IMR-90 (cell line): ENCODE measurements at regions of chr10 and their contacts with region 1.

Region 1: GRCh38 chr10:125928928-125929585 is 32.7 kb downstream of the FANK1 start:
- DNase-seq: no peak
- ATAC-seq: no peak
- H3K4me3 ChIP-seq: no peak overlapping the region
- H3K27ac ChIP-seq: no peak overlapping the region
- H3K4me1 ChIP-seq: no peaks in the 10 kb centered on the region
- H3K27me3 ChIP-seq: no peaks in the 10 kb centered on the region; the same call in 1 of the 2 replicates
- CTCF ChIP-seq: no peak
- POLR2A ChIP-seq: no peak
- RAD21 ChIP-seq: no peak

Region 2: GRCh38 chr10:125742465-125742864 is 186.6 kb before region 1 on chr10:
- CTCF ChIA-PET with region 1: no interaction called
- POLR2A ChIA-PET with region 1: no interaction called
- dilution Hi-C with region 1: no loop called
- in situ Hi-C with region 1: no loop called
- intact Hi-C with region 1: no loop called
- DNase-seq: no peak
- ATAC-seq: peak; percentile 29; the same call in 1 of the 2 replicates
- H3K4me3 ChIP-seq: no peak overlapping the region
- H3K27ac ChIP-seq: no peak overlapping the region
- H3K4me1 ChIP-seq: no peaks in the 10 kb centered on the region
- H3K27me3 ChIP-seq: no peaks in the 10 kb centered on the region
- CTCF ChIP-seq: 0 out of 2 replicates have a peak, but pooled peaks have one; percentile 8
- POLR2A ChIP-seq: no peak
- RAD21 ChIP-seq: no peak

Region 3: DNA sequence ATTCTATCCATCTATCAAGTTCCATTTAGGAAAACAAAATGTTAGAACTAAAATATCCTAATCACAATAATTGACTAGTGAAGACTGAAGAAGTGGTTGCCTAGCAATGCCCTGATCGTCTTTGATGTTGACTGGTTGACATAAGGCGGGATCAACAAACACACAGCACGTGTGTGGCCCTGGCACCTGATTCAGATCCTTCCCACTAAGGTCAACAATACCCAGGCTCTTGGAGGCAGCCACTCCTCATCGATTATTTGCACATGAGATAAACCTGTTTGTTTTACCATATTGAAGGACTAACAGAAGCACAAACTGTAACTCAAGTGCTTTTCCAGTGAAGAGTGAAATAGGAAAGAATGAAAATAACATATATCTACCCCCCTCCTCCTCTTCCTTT is 17.1 kb before region 1 on chr10:
- CTCF ChIA-PET with region 1: no interaction called
- POLR2A ChIA-PET with region 1: no interaction called
- dilution Hi-C with region 1: no loop called
- in situ Hi-C with region 1: no loop called
- intact Hi-C with region 1: no loop called
- DNase-seq: no peak
- ATAC-seq: no peak
- H3K4me3 ChIP-seq: no peak overlapping the region
- H3K27ac ChIP-seq: no peak overlapping the region
- H3K4me1 ChIP-seq: peaks cover 4% of the 10 kb centered on the region; the same call in 1 of the 2 replicates
- H3K27me3 ChIP-seq: no peaks in the 10 kb centered on the region
- CTCF ChIP-seq: no peak
- POLR2A ChIP-seq: no peak
- RAD21 ChIP-seq: no peak

Region 4: DNA sequence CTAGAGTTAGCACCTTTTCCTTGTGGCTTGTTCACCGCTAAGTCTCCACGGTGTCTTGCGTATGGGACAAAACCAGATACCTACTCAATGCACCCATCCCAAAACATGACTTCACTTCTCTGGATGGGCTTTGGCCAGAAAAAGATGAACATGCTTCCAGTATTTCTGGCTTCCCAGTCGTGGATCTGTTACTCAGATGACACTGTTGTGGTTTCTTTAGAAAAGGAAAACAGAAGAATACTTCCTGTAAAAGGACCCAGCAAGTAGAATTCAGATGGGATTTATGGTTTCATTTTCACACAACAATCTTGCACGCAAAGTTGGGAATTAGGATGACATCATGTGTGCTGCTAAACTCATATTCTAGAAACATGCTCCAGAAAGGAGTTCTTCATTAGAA is 242.5 kb after region 1 on chr10:
- CTCF ChIA-PET with region 1: no interaction called
- POLR2A ChIA-PET with region 1: no interaction called
- dilution Hi-C with region 1: no loop called
- in situ Hi-C with region 1: no loop called
- intact Hi-C with region 1: no loop called
- DNase-seq: peak; percentile 79
- ATAC-seq: peak; percentile 32
- H3K4me3 ChIP-seq: no peak overlapping the region
- H3K27ac ChIP-seq: no peak overlapping the region
- H3K4me1 ChIP-seq: peaks cover 3% of the 10 kb centered on the region; the same call in 1 of the 2 replicates
- H3K27me3 ChIP-seq: no peaks in the 10 kb centered on the region
- CTCF ChIP-seq: no peak
- POLR2A ChIP-seq: no peak
- RAD21 ChIP-seq: no peak

Region 5: DNA sequence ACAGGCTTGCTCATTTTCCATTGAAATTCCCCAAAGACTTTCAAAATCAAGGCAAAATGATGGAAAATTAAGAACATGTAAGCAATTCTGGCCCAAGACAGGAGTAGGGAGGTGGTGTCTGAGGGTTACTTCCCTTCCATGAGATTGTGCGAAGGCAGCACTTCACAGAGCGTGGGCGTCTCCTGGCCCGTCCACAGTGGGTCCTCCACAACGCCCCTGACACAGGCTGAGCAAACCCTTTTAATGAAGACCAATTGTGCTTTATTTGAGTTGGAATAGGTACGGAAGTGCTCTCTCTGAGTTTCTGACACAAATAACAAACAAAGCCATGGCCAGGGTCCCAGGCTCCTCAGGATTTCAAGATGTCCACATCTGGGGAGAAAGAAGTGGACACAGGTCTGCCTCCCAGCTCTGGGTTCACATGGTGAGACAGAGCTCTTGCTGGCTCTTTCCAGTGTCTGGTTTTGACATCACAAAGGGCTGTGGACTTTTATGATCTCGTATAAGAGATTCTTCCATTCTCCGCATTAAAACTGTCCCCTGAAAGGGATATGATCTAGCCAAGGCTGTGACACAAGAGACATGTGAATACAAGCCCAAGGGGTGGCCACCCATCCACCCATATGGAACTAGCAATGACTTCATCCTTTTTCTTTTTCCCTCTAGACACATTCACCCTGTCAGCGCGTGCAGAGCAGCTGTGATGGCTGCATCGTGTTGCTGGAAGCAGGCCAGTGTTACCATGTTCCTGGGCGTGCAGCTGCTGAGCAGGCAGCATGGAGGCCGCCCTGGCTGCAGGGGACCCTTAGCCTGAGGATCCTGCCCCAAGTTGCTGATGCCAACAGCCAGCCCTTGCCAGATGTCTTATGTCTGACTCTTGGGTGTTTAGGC is 313.6 kb after region 1 on chr10:
- CTCF ChIA-PET with region 1: no interaction called
- POLR2A ChIA-PET with region 1: no interaction called
- dilution Hi-C with region 1: no loop called
- in situ Hi-C with region 1: no loop called
- intact Hi-C with region 1: no loop called
- DNase-seq: peak; percentile 92
- ATAC-seq: peak; percentile 47
- H3K4me3 ChIP-seq: no peak overlapping the region
- H3K27ac ChIP-seq: no peak overlapping the region
- H3K4me1 ChIP-seq: peaks cover 13% of the 10 kb centered on the region
- H3K27me3 ChIP-seq: no peaks in the 10 kb centered on the region
- CTCF ChIP-seq: no peak
- POLR2A ChIP-seq: no peak
- RAD21 ChIP-seq: 0 out of 2 replicates have a peak, but pooled peaks have one; percentile 2

Region 6: DNA sequence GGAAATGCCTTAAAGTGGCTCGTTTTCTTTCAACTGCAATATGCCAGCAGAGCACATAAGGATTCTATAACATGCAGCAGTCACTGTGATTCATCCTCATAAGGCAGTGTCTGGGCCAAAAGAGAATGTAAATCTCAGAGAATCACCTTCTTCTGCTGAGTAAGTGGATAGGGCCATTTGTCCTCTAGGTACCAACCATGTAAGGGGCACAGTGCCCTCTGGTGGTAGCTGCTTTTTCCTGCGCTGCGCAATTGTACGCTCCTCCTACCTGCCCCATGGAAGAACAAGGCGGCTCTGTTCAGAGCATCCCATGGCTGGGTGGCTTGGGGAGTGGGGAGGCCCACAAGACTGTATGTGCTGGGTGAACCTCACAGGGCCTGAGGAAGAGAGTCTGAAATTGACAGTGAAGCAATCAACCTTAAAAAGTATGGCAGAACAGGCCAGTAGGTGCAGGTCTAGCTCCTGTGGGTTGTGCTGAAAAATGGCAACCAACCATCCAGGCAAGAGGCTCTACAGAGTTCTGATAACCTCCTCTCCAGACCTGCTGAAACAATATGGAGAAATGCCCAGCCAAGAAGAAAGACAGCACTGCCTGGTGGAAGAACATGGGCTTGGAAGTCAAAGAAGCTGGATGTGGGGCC is 820.1 kb after region 1 on chr10:
- CTCF ChIA-PET with region 1: interaction called, 9 read pairs
- POLR2A ChIA-PET with region 1: no interaction called
- dilution Hi-C with region 1: no loop called
- in situ Hi-C with region 1: loop called (anchors 25 kb)
- intact Hi-C with region 1: loop called (anchors 1 kb)
- DNase-seq: peak; percentile 75
- ATAC-seq: peak; percentile 99
- H3K4me3 ChIP-seq: no peak overlapping the region
- H3K27ac ChIP-seq: no peak overlapping the region
- H3K4me1 ChIP-seq: no peaks in the 10 kb centered on the region
- H3K27me3 ChIP-seq: no peaks in the 10 kb centered on the region
- CTCF ChIP-seq: peak; percentile 75
- POLR2A ChIP-seq: no peak
- RAD21 ChIP-seq: peak; percentile 78